HepG2 (cell line): ENCODE measurements at regions of chr2 and their contacts with region 1.

Region 1: GRCh38 chr2:20378792-20379519 is 28.3 kb upstream of the PUM2 start:
- DNase-seq: peak; percentile 80
- ATAC-seq: peak; percentile 98
- H3K4me3 ChIP-seq: peak overlapping the region in 2 of 3 experiments; percentile 21 to 59; a peak in 2 of 6 replicates
- H3K27ac ChIP-seq: no peak overlapping the region
- H3K4me1 ChIP-seq: peaks cover 51% of the 10 kb centered on the region
- H3K27me3 ChIP-seq: peaks cover 2 to 11% of the 10 kb centered on the region in 2 experiments; a peak in 2 of 5 replicates
- CTCF ChIP-seq: peak; percentile 98
- EP300 ChIP-seq: no peak
- POLR2A ChIP-seq: no peak
- RAD21 ChIP-seq: peak; percentile 88

Region 2: GRCh38 chr2:20350753-20351554 is 28.0 kb before region 1 on chr2 and contains the start of gene PUM2:
- CTCF ChIA-PET with region 1: no interaction called
- POLR2A ChIA-PET with region 1: interaction called, 13 read pairs
- in situ Hi-C with region 1: no loop called
- intact Hi-C with region 1: no loop called
- DNase-seq: peak; percentile 96
- ATAC-seq: peak; percentile 87
- H3K4me3 ChIP-seq: peak within 1 kb of the TSS; percentile 96 to 98 (median 96)
- H3K27ac ChIP-seq: peak within 1 kb of the TSS; percentile 98
- H3K4me1 ChIP-seq: peaks cover 61% of the 10 kb centered on the region
- H3K27me3 ChIP-seq: no peaks in the 10 kb centered on the region; a peak in 1 of 5 replicates
- CTCF ChIP-seq: 0 out of 2 replicates have a peak, but pooled peaks have one; percentile 15
- EP300 ChIP-seq: peak in 1 of 2 experiments; percentile 54; a peak in 2 of 4 replicates
- POLR2A ChIP-seq: peak; percentile 62 to 94; a peak in 3 of 4 replicates
- RAD21 ChIP-seq: no peak; the same call in 1 of the 2 replicates
- total RNA-seq, gene PUM2: 69.6 and 94.7 TPM in 2 replicates

Region 3: DNA sequence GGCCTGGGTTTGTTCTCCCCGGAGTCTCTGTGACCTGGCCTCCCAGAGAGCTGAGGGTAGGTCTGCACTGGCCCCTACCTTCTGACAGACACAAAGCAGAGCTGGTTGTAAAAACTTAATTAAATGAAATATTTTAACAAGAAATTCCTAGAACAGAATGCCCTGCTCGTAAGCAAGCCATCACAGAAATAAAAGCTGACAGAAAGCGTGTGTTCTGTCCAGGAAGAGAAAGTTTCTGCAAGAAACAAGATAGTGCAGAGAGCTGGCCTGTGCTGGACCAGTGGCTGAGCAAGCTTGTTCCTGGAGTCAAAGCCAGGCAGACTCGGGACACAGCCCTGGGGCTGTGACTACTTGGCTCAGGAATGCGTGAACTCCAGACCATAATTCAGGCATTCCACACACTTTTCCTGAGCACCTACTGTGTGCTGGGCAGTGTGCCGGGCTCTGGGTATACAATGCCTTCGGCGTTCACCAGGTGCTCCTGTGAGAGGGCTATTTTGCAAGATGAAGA is 613.3 kb after region 1 on chr2:
- CTCF ChIA-PET with region 1: no interaction called
- POLR2A ChIA-PET with region 1: no interaction called
- in situ Hi-C with region 1: loop called (anchors 25 kb)
- intact Hi-C with region 1: no loop called
- DNase-seq: no peak
- ATAC-seq: no peak
- H3K4me3 ChIP-seq: no peak overlapping the region
- H3K27ac ChIP-seq: no peak overlapping the region
- H3K4me1 ChIP-seq: no peaks in the 10 kb centered on the region
- H3K27me3 ChIP-seq: peaks cover 2 to 20% of the 10 kb centered on the region in 2 experiments; a peak in 3 of 5 replicates
- CTCF ChIP-seq: no peak
- EP300 ChIP-seq: no peak
- POLR2A ChIP-seq: no peak
- RAD21 ChIP-seq: no peak

Region 4: DNA sequence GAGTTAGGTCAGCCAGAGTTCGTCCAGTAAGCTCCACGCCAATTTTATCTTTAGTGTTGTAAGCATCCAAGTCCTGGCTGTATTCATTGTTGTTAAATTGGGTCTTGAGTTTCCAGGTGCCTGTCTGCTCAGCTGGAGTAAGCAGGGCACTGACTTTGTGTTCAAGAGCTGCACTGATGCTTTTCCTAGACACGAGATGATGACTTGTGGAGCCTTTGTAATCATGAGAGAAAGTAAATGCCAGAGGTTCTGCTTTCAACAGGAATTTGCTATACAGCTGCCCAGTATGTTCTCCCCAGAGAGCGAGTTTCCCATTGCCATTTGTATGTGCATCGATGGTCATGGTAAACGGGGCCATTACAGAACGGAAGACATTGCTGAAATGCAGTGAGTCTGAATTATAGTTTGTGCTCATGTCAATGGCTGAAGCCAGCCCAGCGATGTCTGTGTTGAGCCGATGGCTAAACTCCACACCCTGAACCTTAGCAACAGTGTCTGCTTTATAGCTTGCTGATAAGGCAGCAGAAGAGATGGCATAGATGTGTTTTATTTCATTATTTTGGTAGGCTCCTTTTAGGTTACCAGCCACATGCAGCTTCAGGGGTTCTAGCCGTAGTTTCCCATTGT is 632.0 kb after region 1 on chr2:
- CTCF ChIA-PET with region 1: no interaction called
- POLR2A ChIA-PET with region 1: no interaction called
- in situ Hi-C with region 1: no loop called
- intact Hi-C with region 1: no loop called
- DNase-seq: no peak
- ATAC-seq: peak; percentile 0; the same call in 1 of the 3 replicates
- H3K4me3 ChIP-seq: no peak overlapping the region
- H3K27ac ChIP-seq: no peak overlapping the region
- H3K4me1 ChIP-seq: peaks cover 30% of the 10 kb centered on the region
- H3K27me3 ChIP-seq: no peaks in the 10 kb centered on the region
- CTCF ChIP-seq: no peak
- EP300 ChIP-seq: no peak
- POLR2A ChIP-seq: peak; percentile 57 to 74; a peak in 3 of 4 replicates
- RAD21 ChIP-seq: no peak